ENCODE measurements at regions of chr22 and their contacts with region 1.

Region 1: GRCh38 chr22:38114484-38115398 is 4.3 kb upstream of the BAIAP2L2 start:
- DNase-seq: peak; percentile 82
- H3K4me3 ChIP-seq: no peak overlapping the region
- H3K27ac ChIP-seq: no peak overlapping the region
- H3K4me1 ChIP-seq: no peaks in the 10 kb centered on the region
- H3K27me3 ChIP-seq: no peaks in the 10 kb centered on the region
- CTCF ChIP-seq: peak; percentile 72 to 92 (median 90)
- POLR2A ChIP-seq: no peak

Region 2: DNA sequence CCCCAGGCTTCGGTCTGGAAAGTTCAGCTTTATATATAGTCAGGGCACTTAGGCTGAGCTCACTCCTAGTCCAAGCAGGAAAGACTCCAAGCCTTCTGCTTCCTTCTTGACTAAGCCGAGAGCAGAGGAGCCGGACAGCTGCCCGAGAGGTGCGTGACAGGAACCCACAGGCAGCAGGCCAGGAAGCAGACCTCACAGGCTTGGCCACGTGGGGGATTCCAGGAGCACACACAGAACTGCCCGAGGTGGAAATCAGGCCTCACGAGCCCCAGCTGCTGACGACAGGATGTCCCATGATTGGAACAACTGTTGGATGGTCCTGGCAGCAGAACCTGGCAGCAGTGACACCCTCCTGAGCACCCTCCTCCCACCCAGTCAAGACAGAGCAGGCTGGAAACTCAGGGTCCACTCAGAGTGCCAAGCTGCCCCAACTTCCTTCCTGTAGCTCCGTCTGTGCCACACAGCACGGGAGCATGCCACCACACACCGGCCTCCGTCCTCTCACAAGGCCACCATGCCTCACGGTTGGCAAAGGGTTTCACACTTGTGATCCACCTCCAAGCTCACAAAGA is 61.5 kb after region 1 on chr22:
- intact Hi-C with region 1: loop called (anchors 10 kb)
- DNase-seq: peak; percentile 73
- H3K4me3 ChIP-seq: no peak overlapping the region
- H3K27ac ChIP-seq: peak overlapping the region; percentile 95 to 99
- H3K4me1 ChIP-seq: peaks cover 22% of the 10 kb centered on the region
- H3K27me3 ChIP-seq: no peaks in the 10 kb centered on the region
- CTCF ChIP-seq: no peak
- POLR2A ChIP-seq: no peak

Region 3: DNA sequence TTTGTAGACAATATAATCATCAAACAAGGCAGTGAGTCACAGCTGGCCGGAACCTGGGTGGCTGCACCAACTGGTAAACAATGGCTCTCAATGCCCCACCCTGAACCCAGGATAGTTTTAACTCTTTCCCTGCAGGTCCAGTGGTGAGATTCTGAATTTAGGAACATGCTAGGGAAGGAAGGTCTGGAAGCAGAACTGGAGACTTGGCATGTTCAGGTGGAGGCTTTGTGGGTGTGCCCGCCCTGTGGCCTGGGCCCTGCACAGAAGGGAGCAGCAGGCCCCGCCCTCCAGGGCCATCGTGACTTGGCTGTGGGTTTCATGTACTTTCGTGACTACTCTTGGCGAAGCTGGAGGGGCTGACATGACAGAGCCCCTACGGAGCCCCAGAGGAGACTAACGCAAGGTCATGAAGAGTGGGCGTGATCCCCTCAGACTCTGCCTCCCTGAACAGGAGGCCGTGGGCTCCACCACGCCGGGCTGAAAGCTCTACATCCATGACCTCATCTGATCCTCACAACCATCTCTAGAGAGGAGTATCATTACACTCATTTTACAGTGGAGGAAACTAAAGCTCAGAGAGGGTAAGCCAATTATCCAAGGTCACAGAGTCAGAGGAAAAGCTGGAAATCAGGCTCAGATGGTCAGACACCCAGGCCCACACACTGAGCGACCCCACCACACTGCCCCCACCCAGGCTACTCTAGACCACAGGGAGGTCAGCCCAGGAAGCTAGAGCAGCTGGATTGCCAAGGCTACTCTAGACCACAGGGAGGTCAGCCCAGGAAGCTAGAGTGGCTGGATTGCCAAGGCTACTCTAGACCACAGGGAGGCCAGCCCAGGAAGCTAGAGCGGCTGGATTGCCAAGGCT is 114.4 kb after region 1 on chr22:
- intact Hi-C with region 1: loop called (anchors 10 kb)
- DNase-seq: peak; percentile 76
- H3K4me3 ChIP-seq: no peak overlapping the region
- H3K27ac ChIP-seq: peak overlapping the region; percentile 85 to 90
- H3K4me1 ChIP-seq: peaks cover 12% of the 10 kb centered on the region
- H3K27me3 ChIP-seq: no peaks in the 10 kb centered on the region
- CTCF ChIP-seq: peak in 1 of 4 experiments; percentile 6
- POLR2A ChIP-seq: no peak